ENCODE measurements at regions of chrX and their contacts with region 1.

Region 1: DNA sequence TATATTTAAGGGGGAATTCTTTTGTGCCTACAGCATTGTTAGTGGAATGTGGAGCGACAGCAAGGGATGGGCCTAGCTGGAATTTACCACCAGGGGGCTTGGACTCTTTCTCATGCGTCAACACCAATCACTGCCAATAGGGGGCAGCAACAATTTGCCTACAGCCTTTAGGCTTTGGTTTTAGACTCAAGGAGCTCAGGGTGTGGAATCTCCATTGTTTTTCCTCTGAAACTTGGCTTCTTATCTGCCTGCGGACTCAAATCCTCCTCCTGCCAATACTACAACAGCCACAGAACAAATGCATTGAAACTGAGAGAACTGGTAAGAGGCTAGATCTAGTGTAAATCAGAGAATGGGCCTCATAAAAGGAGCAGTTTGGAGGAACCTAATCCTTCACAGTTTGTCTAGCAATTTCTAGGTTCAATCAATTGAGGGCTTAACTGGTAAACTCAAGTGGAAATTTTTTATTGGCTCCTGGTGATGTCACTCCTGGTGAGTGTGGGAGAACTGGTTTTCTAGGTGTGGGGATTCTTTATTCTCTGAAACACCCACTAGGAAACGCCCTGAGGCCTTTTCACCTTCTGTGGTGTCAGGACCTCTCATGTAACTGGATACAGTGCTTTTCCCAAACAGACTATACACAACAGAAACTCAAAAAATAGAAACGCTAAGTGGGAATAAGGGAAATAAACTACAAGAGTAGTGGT is 27.9 kb upstream of the TMSB4X start:
- DNase-seq: peak; percentile 81
- H3K4me3 ChIP-seq: no peak overlapping the region
- H3K27ac ChIP-seq: no peak overlapping the region
- H3K4me1 ChIP-seq: peaks cover 52% of the 10 kb centered on the region
- CTCF ChIP-seq: peak; percentile 97

Region 2: GRCh38 chrX:13000301-13000811 is 53.4 kb after region 1 on chrX:
- CTCF ChIA-PET with region 1: no interaction called
- POLR2A ChIA-PET with region 1: interaction called, 6 read pairs
- intact Hi-C with region 1: loop called (anchors 1 kb)
- DNase-seq: peak; percentile 80
- H3K4me3 ChIP-seq: peak overlapping the region; percentile 62
- H3K27ac ChIP-seq: peak overlapping the region; percentile 83
- H3K4me1 ChIP-seq: peaks cover 64% of the 10 kb centered on the region
- CTCF ChIP-seq: no peak

Region 3: DNA sequence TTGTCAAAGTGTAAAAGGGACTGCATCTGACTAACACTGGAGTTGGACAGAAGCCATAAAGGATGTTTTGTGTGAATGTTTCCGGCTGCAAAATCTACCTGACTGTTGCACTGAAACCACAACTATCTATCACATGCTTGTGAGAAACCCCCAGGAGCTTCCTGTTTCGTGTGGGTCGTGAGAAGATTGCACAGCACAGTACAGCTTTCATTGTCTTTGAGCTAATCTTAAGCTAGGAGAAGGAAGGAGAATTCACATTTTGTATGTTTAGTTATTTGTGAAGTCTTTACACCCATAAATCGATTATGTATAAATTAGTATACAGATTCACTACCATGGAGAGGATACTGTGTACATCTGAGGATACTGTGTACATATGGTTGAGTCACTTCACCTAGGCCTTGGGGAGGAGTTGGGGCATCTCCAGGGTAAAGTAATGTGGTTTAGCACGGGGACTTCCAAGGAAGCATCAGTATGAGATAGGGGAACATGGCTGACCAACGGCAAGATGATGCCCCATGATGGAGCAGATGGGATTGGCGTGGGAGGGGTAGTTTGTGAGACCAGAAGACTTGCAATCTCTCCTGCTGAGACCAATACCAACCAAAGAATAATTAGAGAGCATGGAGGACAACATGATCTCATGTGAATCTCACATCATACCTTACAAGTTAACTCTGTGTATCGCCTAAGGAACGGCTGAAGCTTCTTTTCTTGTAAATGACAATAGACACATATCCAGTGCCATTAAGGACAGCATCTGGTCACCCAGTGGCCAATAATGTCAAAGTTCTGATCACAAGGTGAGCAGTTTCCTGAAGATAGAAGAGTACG is 140.5 kb after region 1 on chrX:
- CTCF ChIA-PET with region 1: interaction called, 4 read pairs
- POLR2A ChIA-PET with region 1: interaction called, 15 read pairs
- intact Hi-C with region 1: loop called (anchors 1 kb)
- DNase-seq: peak; percentile 89
- H3K4me3 ChIP-seq: peak overlapping the region; percentile 44
- H3K27ac ChIP-seq: peak overlapping the region; percentile 98
- H3K4me1 ChIP-seq: peaks cover 94% of the 10 kb centered on the region
- CTCF ChIP-seq: no peak

Region 4: GRCh38 chrX:13212191-13212651 is 265.2 kb after region 1 on chrX:
- CTCF ChIA-PET with region 1: no interaction called
- POLR2A ChIA-PET with region 1: no interaction called
- intact Hi-C with region 1: no loop called
- DNase-seq: no peak
- H3K4me3 ChIP-seq: no peak overlapping the region
- H3K27ac ChIP-seq: no peak overlapping the region
- H3K4me1 ChIP-seq: no peaks in the 10 kb centered on the region
- CTCF ChIP-seq: no peak

Region 5: GRCh38 chrX:13223868-13224555 is 277.0 kb after region 1 on chrX:
- CTCF ChIA-PET with region 1: no interaction called
- POLR2A ChIA-PET with region 1: no interaction called
- intact Hi-C with region 1: loop called (anchors 10 kb)
- DNase-seq: no peak
- H3K4me3 ChIP-seq: no peak overlapping the region
- H3K27ac ChIP-seq: no peak overlapping the region
- H3K4me1 ChIP-seq: no peaks in the 10 kb centered on the region
- CTCF ChIP-seq: no peak

Region 6: GRCh38 chrX:13487731-13488523 is 540.9 kb after region 1 on chrX:
- CTCF ChIA-PET with region 1: interaction called, 15 read pairs
- POLR2A ChIA-PET with region 1: interaction called, 14 read pairs
- intact Hi-C with region 1: loop called (anchors 1 kb)
- DNase-seq: peak; percentile 73
- H3K4me3 ChIP-seq: peak overlapping the region; percentile 49
- H3K27ac ChIP-seq: peak overlapping the region; percentile 63
- H3K4me1 ChIP-seq: peaks cover 23% of the 10 kb centered on the region
- CTCF ChIP-seq: peak; percentile 74

Measured in OCI-LY7 (cell line).